Activated B cell treated with CpG ODN at 0.5 μM for 24 hours (primary cell): ENCODE measurements at regions of chr14 and their contacts with region 1.

Region 1: GRCh38 chr14:100108042-100108825 is 43.0 kb downstream of the EVL start:
- DNase-seq: peak; percentile 80
- ATAC-seq: peak; percentile 98
- H3K4me3 Mint-ChIP-seq: no peak overlapping the region
- H3K27ac Mint-ChIP-seq: peak overlapping the region; percentile 86
- H3K4me1 Mint-ChIP-seq: peaks cover 49% of the 10 kb centered on the region
- H3K27me3 Mint-ChIP-seq: no peaks in the 10 kb centered on the region
- CTCF ChIP-seq: peak; percentile 17

Region 2: DNA sequence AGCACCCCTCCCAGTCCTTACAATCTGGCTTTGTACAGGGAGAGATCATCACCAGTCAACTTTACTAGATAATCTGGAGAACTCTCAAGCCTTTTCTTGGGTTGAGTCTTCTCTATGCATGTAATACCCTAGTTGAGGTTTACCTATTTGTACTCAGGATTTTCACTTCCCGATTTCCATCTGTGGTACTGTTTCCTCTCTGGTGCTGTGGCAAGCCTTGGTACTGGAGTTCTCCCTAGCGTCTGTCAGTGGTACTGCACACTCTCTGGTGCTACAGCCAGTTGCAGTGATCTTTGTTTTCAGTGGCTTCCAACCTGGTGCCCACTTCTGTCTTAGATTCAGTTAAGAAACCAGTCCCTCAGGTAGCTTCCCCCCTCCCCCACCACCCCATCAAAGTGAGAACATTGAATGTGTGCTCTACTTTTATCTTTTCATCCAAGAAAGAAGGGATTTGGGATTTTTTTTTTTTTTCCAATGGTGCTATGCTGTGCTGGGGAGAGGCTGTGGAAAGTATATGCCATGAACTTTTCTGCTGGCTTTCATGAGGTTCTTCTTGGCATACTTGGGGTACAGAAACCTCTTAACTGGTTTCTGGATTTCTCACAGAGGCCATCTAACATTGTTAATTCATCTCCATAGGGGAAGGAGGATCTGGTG is 112.4 kb before region 1 on chr14:
- CTCF ChIA-PET with region 1: interaction called, 3 read pairs
- POLR2A ChIA-PET with region 1: no interaction called
- intact Hi-C with region 1: loop called (anchors 1 kb)
- DNase-seq: peak; percentile 39
- ATAC-seq: peak; percentile 100
- H3K4me3 Mint-ChIP-seq: no peak overlapping the region
- H3K27ac Mint-ChIP-seq: no peak overlapping the region
- H3K4me1 Mint-ChIP-seq: peaks cover 12% of the 10 kb centered on the region
- H3K27me3 Mint-ChIP-seq: peaks cover 20% of the 10 kb centered on the region
- CTCF ChIP-seq: peak; percentile 86

Region 3: GRCh38 chr14:100056964-100057795 is 51.1 kb before region 1 on chr14:
- CTCF ChIA-PET with region 1: interaction called, 117 read pairs
- POLR2A ChIA-PET with region 1: interaction called, 4 read pairs
- intact Hi-C with region 1: loop called (anchors 1 kb)
- DNase-seq: no peak
- ATAC-seq: peak; percentile 82
- H3K4me3 Mint-ChIP-seq: no peak overlapping the region
- H3K27ac Mint-ChIP-seq: peak overlapping the region; percentile 43
- H3K4me1 Mint-ChIP-seq: peaks cover 32% of the 10 kb centered on the region
- H3K27me3 Mint-ChIP-seq: no peaks in the 10 kb centered on the region
- CTCF ChIP-seq: no peak

Region 4: GRCh38 chr14:100078991-100079725 is 29.1 kb before region 1 on chr14:
- CTCF ChIA-PET with region 1: interaction called, 111 read pairs
- POLR2A ChIA-PET with region 1: interaction called, 10 read pairs
- intact Hi-C with region 1: no loop called
- DNase-seq: no peak
- ATAC-seq: peak; percentile 60
- H3K4me3 Mint-ChIP-seq: peak overlapping the region; percentile 49
- H3K27ac Mint-ChIP-seq: peak overlapping the region; percentile 80
- H3K4me1 Mint-ChIP-seq: peaks cover 93% of the 10 kb centered on the region
- H3K27me3 Mint-ChIP-seq: no peaks in the 10 kb centered on the region
- CTCF ChIP-seq: no peak

Region 5: GRCh38 chr14:100093319-100093718 is 14.9 kb before region 1 on chr14:
- CTCF ChIA-PET with region 1: interaction called, 6 read pairs
- POLR2A ChIA-PET with region 1: no interaction called
- intact Hi-C with region 1: loop called (anchors 2 kb)
- DNase-seq: no peak
- ATAC-seq: no peak
- H3K4me3 Mint-ChIP-seq: no peak overlapping the region
- H3K27ac Mint-ChIP-seq: peak overlapping the region; percentile 30
- H3K4me1 Mint-ChIP-seq: peaks cover 6% of the 10 kb centered on the region
- H3K27me3 Mint-ChIP-seq: no peaks in the 10 kb centered on the region
- CTCF ChIP-seq: no peak

Region 6: GRCh38 chr14:100147181-100147631 is 39.0 kb after region 1 on chr14:
- CTCF ChIA-PET with region 1: no interaction called
- POLR2A ChIA-PET with region 1: no interaction called
- intact Hi-C with region 1: no loop called
- DNase-seq: no peak
- ATAC-seq: peak; percentile 73
- H3K4me3 Mint-ChIP-seq: peak overlapping the region; percentile 68
- H3K27ac Mint-ChIP-seq: peak overlapping the region; percentile 82
- H3K4me1 Mint-ChIP-seq: peaks cover 29% of the 10 kb centered on the region
- H3K27me3 Mint-ChIP-seq: no peaks in the 10 kb centered on the region
- CTCF ChIP-seq: no peak

Region 7: DNA sequence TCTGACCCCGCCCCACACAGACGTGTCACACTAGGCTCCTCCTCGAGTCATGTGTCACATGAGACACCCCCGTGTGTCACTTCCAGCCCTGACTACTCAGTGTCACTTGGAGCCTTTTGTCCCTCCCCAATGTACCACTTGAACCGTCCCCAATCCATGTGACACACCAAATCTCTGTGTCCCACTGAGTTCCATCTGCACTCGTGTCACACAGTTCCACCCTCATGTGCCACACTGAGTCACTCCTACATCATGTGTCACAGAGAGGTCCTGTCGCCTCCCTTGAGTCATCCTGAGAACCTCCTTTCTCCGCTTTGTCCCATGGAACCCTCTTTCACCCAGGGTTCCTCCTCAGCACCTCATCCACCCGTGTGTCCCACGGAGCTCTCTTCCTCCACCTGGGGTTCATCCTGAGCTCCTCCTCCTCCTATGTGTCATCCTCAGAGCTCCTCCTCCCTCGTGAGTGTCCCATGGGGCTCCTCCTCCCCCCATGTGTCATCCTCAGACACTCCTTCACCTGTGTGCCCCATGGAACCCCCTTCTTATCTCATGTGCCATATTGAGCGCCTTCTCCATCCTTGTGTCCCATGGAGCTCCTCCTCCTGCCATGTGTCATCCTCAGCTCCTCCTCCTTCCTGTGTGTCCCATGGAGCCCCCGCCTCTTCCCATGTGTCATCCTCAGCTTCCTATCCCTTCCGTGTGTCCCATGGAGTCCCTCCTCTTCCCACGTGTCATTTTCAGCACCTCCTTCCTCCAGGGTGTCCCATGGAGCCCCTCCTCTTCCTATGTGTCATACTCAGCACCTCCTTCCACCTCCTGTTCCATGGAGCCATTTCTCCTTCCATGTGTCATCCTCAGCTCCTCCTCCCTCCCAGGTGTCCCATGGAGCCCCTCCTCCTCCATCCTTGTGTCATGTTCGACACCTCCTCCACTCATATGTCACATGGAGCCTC is 763.3 kb after region 1 on chr14:
- CTCF ChIA-PET with region 1: no interaction called
- POLR2A ChIA-PET with region 1: no interaction called
- intact Hi-C with region 1: no loop called
- DNase-seq: no peak
- ATAC-seq: no peak
- H3K4me3 Mint-ChIP-seq: no peak overlapping the region
- H3K27ac Mint-ChIP-seq: no peak overlapping the region
- H3K4me1 Mint-ChIP-seq: no peaks in the 10 kb centered on the region
- H3K27me3 Mint-ChIP-seq: no peaks in the 10 kb centered on the region
- CTCF ChIP-seq: no peak